Activated naive CD4-positive, alpha-beta T cell treated with anti-CD3 and anti-CD28 coated beads, Interleukin-2, amount 10 ng/mL, durations not matched to agents 7 days and 5 days (primary cell): ENCODE measurements at regions of chr12 and their contacts with region 1.

Region 1: DNA sequence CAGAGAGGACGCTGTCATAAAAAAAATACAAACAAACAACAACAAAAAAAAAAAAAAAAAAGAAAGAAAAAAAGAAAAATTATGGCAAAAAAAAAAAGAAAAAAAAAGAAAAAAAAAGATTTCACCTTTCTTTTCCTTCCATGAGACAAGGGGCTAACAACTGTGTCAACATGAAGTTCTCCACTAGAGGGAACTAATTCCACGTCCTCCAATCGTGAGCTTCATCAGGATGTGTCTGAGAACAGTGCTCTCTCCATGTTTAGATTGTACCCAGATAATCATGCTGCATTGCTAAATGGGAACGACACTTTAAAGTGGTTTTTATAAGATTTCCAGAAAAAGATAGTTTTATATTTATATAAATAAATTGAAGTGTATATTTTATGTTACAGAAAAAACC is 96.2 kb upstream of the PTPRB start:
- DNase-seq: peak; percentile 21
- H3K4me3 Mint-ChIP-seq: no peak overlapping the region
- H3K27ac Mint-ChIP-seq: no peak overlapping the region
- H3K4me1 Mint-ChIP-seq: no peaks in the 10 kb centered on the region
- H3K27me3 Mint-ChIP-seq: peaks cover 10% of the 10 kb centered on the region

Region 2: DNA sequence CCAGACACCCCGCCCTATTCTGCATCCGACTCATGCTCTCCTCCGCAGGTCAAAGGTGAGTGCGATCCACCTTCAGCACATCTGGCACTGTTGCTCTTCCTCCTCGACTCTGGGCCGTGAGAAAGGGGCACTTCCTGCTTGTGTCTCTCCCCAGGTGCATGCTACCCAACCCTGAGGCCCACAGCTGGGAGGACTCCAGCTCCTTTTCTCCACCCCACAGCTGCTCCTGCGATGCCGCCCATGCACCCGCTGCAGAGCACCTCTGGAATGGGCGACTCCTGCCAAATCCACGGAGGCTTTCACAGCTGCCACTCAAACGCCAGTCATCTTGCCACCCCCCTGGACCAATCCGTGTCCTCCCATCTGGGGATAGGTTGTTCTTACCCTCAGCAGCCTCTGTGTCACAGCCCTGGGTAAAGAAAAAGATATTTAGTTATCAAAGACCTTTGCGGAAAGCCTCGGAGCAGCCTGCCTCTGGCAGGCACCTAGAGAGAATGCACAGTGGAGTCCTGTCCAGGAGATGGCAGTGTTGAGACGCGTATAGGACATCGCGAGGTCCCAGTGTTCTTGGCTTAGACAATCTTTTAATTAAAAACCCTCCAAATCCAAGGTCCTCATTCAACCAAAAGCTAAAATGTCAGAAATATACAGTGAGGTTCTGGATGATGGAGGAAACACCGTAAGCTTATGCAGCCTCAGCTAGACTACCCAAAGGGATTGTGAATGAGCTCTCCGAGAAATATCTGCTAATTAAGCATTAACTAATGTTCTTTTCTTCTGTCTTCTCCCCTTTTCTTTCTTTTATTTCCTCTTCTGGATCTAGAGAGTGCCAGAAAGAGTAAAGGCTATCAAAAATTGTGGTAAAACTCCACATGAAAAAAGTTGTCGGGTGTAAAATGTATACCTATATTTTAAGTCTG is 854.1 kb before region 1 on chr12:
- CTCF ChIA-PET with region 1: interaction called, 22 read pairs
- DNase-seq: peak; percentile 75
- H3K4me3 Mint-ChIP-seq: no peak overlapping the region
- H3K27ac Mint-ChIP-seq: no peak overlapping the region
- H3K4me1 Mint-ChIP-seq: peaks cover 4% of the 10 kb centered on the region
- H3K27me3 Mint-ChIP-seq: peaks cover 9% of the 10 kb centered on the region

Region 3: DNA sequence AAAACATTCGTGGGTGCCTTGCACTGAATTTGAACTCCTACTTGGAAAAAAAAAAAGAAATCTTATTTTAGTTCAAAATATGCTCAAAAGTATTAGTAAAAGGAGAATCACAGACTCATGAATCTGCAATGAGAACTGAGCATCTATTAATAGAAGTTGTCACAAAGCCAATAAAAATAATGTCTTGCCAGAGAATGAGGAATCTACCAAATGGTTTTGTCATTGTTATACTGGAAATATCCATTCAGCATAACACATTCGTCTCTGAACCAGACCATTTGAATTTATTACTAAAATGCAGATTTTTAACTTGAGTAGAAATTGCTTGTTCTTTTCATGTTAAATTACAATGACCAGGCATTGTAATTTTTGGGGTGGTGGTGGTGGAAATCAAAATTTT is 84.6 kb before region 1 on chr12:
- CTCF ChIA-PET with region 1: no interaction called
- DNase-seq: no peak
- H3K4me3 Mint-ChIP-seq: no peak overlapping the region
- H3K27ac Mint-ChIP-seq: no peak overlapping the region
- H3K4me1 Mint-ChIP-seq: peaks cover 10% of the 10 kb centered on the region
- H3K27me3 Mint-ChIP-seq: peaks cover 4% of the 10 kb centered on the region

Region 4: GRCh38 chr12:70660620-70661219 is 72.7 kb before region 1 on chr12:
- CTCF ChIA-PET with region 1: no interaction called
- DNase-seq: peak; percentile 22
- H3K4me3 Mint-ChIP-seq: no peak overlapping the region
- H3K27ac Mint-ChIP-seq: no peak overlapping the region
- H3K4me1 Mint-ChIP-seq: no peaks in the 10 kb centered on the region
- H3K27me3 Mint-ChIP-seq: no peaks in the 10 kb centered on the region

Region 5: DNA sequence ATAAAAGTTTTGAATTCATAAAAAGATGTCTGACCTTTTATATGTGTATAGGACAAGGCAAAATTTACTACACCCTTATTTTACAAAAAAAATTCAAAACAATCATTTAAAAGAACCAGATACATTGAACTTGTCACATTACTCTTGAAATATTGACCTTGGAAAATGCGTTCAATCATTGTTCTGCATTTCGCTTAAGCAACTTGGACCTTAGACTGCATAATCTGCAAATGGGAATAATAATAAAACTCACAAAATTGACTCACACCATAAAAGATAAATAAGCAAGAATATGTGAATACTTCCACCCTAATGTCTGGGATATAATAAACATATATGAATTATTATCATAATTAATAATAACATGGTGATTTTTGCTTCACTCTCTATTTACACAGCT is 26.8 kb before region 1 on chr12:
- CTCF ChIA-PET with region 1: no interaction called
- DNase-seq: no peak
- H3K4me3 Mint-ChIP-seq: no peak overlapping the region
- H3K27ac Mint-ChIP-seq: no peak overlapping the region
- H3K4me1 Mint-ChIP-seq: no peaks in the 10 kb centered on the region
- H3K27me3 Mint-ChIP-seq: peaks cover 4% of the 10 kb centered on the region

Region 6: GRCh38 chr12:70722584-70723343 is 10.6 kb before region 1 on chr12:
- CTCF ChIA-PET with region 1: interaction called, 14 read pairs
- DNase-seq: peak; percentile 35
- H3K4me3 Mint-ChIP-seq: no peak overlapping the region
- H3K27ac Mint-ChIP-seq: no peak overlapping the region
- H3K4me1 Mint-ChIP-seq: peaks cover 6% of the 10 kb centered on the region
- H3K27me3 Mint-ChIP-seq: peaks cover 15% of the 10 kb centered on the region